CD4-positive, alpha-beta T cell (primary cell): ENCODE measurements at regions of chr7 and their contacts with region 1.

Region 1: GRCh38 chr7:43582503-43583423 is at the start of gene STK17A:
- DNase-seq: peak; percentile 86 to 98 (median 94)
- ATAC-seq: peak; percentile 71
- H3K4me3 ChIP-seq: peak within 1 kb of the TSS; percentile 77
- H3K4me3 Mint-ChIP-seq: peak within 1 kb of the TSS; percentile 95
- H3K27ac ChIP-seq: peak within 1 kb of the TSS; percentile 87 to 97
- H3K27ac Mint-ChIP-seq: peak within 1 kb of the TSS; percentile 98
- H3K4me1 ChIP-seq: peaks cover 10% of the 10 kb centered on the region
- H3K4me1 Mint-ChIP-seq: peaks cover 38% of the 10 kb centered on the region
- H3K27me3 ChIP-seq: no peaks in the 10 kb centered on the region
- H3K27me3 Mint-ChIP-seq: peaks cover 21% of the 10 kb centered on the region
- CTCF ChIP-seq: peak; percentile 85
- total RNA-seq, gene STK17A: 213 to 218 TPM

Region 2: GRCh38 chr7:42940985-42941847 is 641.5 kb before region 1 on chr7:
- CTCF ChIA-PET with region 1: no interaction called
- POLR2A ChIA-PET with region 1: interaction called, 3 read pairs
- intact Hi-C with region 1: loop called in 1 of 2 experiments (anchors 2 kb)
- DNase-seq: peak; percentile 58 to 80 (median 71)
- ATAC-seq: peak; percentile 72
- H3K4me3 ChIP-seq: no peak overlapping the region
- H3K4me3 Mint-ChIP-seq: no peak overlapping the region
- H3K27ac ChIP-seq: no peak overlapping the region
- H3K27ac Mint-ChIP-seq: no peak overlapping the region
- H3K4me1 ChIP-seq: peaks cover 4% of the 10 kb centered on the region
- H3K4me1 Mint-ChIP-seq: peaks cover 4% of the 10 kb centered on the region
- H3K27me3 ChIP-seq: no peaks in the 10 kb centered on the region
- H3K27me3 Mint-ChIP-seq: no peaks in the 10 kb centered on the region
- CTCF ChIP-seq: peak; percentile 87

Region 3: DNA sequence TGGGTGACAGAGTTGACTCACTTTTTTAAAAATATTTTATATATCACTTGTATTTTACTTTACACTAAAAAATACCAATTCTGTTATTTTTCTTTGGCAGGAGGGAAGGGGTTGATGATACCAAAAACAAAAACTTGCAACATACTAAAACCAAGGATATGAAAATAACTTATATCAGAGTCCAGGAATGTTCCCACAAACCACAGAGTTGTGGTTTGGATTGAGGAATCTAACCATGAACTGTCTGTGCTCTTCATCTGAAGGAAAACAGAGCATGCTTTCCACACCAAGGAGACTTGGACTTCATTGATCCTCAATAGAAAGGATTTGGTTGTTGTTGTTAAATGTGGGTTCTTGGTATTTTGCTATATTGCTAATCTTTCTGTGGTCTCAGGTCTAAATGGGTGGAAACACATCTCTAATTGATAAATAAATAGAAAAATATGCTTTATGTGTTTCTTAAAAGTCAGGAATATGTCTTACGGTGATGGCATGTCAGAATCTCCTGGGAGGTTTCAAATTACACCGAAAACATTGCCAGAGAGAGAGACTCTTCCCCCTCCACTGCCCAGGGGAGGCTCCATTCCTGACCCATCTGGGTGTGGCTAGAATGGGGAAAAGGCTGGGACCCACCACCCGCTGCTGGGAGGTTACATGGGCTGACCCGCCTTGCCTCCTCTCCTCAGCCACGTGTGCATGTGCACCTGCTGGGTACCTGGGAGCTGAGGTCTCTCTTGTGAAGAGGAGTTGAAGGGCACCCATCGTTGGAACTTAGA is 46.8 kb before region 1 on chr7:
- CTCF ChIA-PET with region 1: no interaction called
- POLR2A ChIA-PET with region 1: no interaction called
- intact Hi-C with region 1: no loop called
- DNase-seq: no peak
- ATAC-seq: no peak
- H3K4me3 ChIP-seq: no peak overlapping the region
- H3K4me3 Mint-ChIP-seq: no peak overlapping the region
- H3K27ac ChIP-seq: no peak overlapping the region
- H3K27ac Mint-ChIP-seq: no peak overlapping the region
- H3K4me1 ChIP-seq: no peaks in the 10 kb centered on the region
- H3K4me1 Mint-ChIP-seq: no peaks in the 10 kb centered on the region
- H3K27me3 ChIP-seq: peaks cover 0 to 2% of the 10 kb centered on the region in 2 experiments
- H3K27me3 Mint-ChIP-seq: no peaks in the 10 kb centered on the region
- CTCF ChIP-seq: no peak

Region 4: GRCh38 chr7:43546231-43546630 is 36.5 kb before region 1 on chr7:
- CTCF ChIA-PET with region 1: no interaction called
- POLR2A ChIA-PET with region 1: no interaction called
- intact Hi-C with region 1: no loop called
- DNase-seq: no peak
- ATAC-seq: no peak
- H3K4me3 ChIP-seq: no peak overlapping the region
- H3K4me3 Mint-ChIP-seq: no peak overlapping the region
- H3K27ac ChIP-seq: no peak overlapping the region
- H3K27ac Mint-ChIP-seq: no peak overlapping the region
- H3K4me1 ChIP-seq: no peaks in the 10 kb centered on the region
- H3K4me1 Mint-ChIP-seq: no peaks in the 10 kb centered on the region
- H3K27me3 ChIP-seq: peaks cover 0 to 3% of the 10 kb centered on the region in 2 experiments
- H3K27me3 Mint-ChIP-seq: peaks cover 20% of the 10 kb centered on the region
- CTCF ChIP-seq: no peak

Region 5: DNA sequence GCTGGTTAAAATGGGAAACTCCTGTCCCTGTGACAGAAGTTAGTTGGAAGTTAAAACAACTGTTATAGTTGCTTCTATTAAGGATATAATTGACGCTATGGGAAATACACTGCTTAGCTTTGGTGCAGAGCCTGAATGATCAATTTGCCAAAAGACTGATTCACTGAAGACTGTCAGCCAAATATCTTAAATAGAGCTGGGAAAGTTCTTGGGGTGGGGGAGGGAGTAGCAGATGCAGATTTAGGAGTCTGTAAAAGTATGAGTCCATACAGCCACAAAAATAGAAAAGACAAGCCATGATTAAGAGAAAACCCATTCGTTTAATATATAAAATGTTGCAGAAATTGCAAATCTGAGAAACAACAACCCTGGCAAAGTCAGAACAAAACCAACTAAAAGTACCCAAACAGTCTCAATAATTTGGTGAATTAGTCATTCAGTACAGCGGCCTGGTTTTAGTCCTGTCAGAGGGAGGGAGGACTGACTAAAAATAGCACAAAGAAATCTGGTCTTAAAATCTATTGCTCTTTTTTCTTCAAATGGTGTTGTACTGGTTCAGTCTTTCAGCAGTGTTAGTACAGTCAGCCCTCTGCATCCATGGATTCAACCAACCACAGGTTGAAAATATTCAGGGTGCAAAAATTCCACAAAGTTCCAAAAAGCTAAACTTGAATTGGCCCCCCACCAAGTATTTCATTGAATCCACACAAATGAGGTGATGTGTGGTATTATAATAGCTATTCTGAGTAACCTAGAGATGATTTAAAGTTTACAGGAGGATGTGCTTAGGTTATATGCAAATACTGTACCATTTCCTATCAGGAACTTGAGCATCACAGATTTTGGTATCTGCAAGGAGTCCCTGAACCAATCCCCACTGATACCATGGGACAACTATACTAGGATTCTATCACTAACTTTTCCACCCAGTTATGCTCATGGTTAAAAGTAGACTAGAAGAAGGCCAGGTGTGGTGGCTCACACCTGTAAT is 30.1 kb after region 1 on chr7:
- CTCF ChIA-PET with region 1: interaction called, 56 read pairs
- POLR2A ChIA-PET with region 1: interaction called, 27 read pairs
- intact Hi-C with region 1: no loop called
- DNase-seq: no peak
- ATAC-seq: peak; percentile 25
- H3K4me3 ChIP-seq: no peak overlapping the region
- H3K4me3 Mint-ChIP-seq: peak overlapping the region; percentile 23
- H3K27ac ChIP-seq: peak overlapping the region; percentile 40 to 44
- H3K27ac Mint-ChIP-seq: peak overlapping the region; percentile 72
- H3K4me1 ChIP-seq: peaks cover 62% of the 10 kb centered on the region
- H3K4me1 Mint-ChIP-seq: peaks cover 55% of the 10 kb centered on the region
- H3K27me3 ChIP-seq: no peaks in the 10 kb centered on the region
- H3K27me3 Mint-ChIP-seq: no peaks in the 10 kb centered on the region
- CTCF ChIP-seq: no peak

Region 6: GRCh38 chr7:43639858-43640491 is 57.2 kb after region 1 on chr7:
- CTCF ChIA-PET with region 1: interaction called, 167 read pairs
- POLR2A ChIA-PET with region 1: interaction called, 300 read pairs
- intact Hi-C with region 1: no loop called
- DNase-seq: no peak
- ATAC-seq: no peak
- H3K4me3 ChIP-seq: no peak overlapping the region
- H3K4me3 Mint-ChIP-seq: peak overlapping the region; percentile 61
- H3K27ac ChIP-seq: peak overlapping the region; percentile 46 to 51
- H3K27ac Mint-ChIP-seq: peak overlapping the region; percentile 87
- H3K4me1 ChIP-seq: peaks cover 71% of the 10 kb centered on the region
- H3K4me1 Mint-ChIP-seq: peaks cover 96% of the 10 kb centered on the region
- H3K27me3 ChIP-seq: no peaks in the 10 kb centered on the region
- H3K27me3 Mint-ChIP-seq: no peaks in the 10 kb centered on the region
- CTCF ChIP-seq: no peak

Region 7: GRCh38 chr7:43674584-43675436 is 92.0 kb after region 1 on chr7:
- CTCF ChIA-PET with region 1: interaction called, 46 read pairs
- POLR2A ChIA-PET with region 1: interaction called, 11 read pairs
- intact Hi-C with region 1: no loop called
- DNase-seq: no peak
- ATAC-seq: no peak
- H3K4me3 ChIP-seq: no peak overlapping the region
- H3K4me3 Mint-ChIP-seq: no peak overlapping the region
- H3K27ac ChIP-seq: no peak overlapping the region
- H3K27ac Mint-ChIP-seq: peak overlapping the region; percentile 56
- H3K4me1 ChIP-seq: peaks cover 18% of the 10 kb centered on the region
- H3K4me1 Mint-ChIP-seq: peaks cover 87% of the 10 kb centered on the region
- H3K27me3 ChIP-seq: no peaks in the 10 kb centered on the region
- H3K27me3 Mint-ChIP-seq: no peaks in the 10 kb centered on the region
- CTCF ChIP-seq: no peak

Region 8: GRCh38 chr7:43711503-43711902 is 128.7 kb after region 1 on chr7:
- CTCF ChIA-PET with region 1: interaction called, 26 read pairs
- POLR2A ChIA-PET with region 1: interaction called, 18 read pairs
- intact Hi-C with region 1: no loop called
- DNase-seq: no peak
- ATAC-seq: no peak
- H3K4me3 ChIP-seq: no peak overlapping the region
- H3K4me3 Mint-ChIP-seq: no peak overlapping the region
- H3K27ac ChIP-seq: no peak overlapping the region
- H3K27ac Mint-ChIP-seq: no peak overlapping the region
- H3K4me1 ChIP-seq: peaks cover under 1% of the 10 kb centered on the region
- H3K4me1 Mint-ChIP-seq: peaks cover 35% of the 10 kb centered on the region
- H3K27me3 ChIP-seq: no peaks in the 10 kb centered on the region
- H3K27me3 Mint-ChIP-seq: no peaks in the 10 kb centered on the region
- CTCF ChIP-seq: no peak

Region 9: GRCh38 chr7:43834463-43835251 is 251.9 kb after region 1 on chr7:
- CTCF ChIA-PET with region 1: interaction called, 39 read pairs
- POLR2A ChIA-PET with region 1: interaction called, 18 read pairs
- intact Hi-C with region 1: loop called (anchors 1 kb)
- DNase-seq: peak in 10 of 14 experiments; percentile 4 to 82 (median 12)
- ATAC-seq: peak; percentile 56
- H3K4me3 ChIP-seq: peak overlapping the region; percentile 68
- H3K4me3 Mint-ChIP-seq: peak overlapping the region; percentile 94
- H3K27ac ChIP-seq: peak overlapping the region in 1 of 2 donors; percentile 76
- H3K27ac Mint-ChIP-seq: peak overlapping the region; percentile 93
- H3K4me1 ChIP-seq: peaks cover 29% of the 10 kb centered on the region
- H3K4me1 Mint-ChIP-seq: peaks cover 26% of the 10 kb centered on the region
- H3K27me3 ChIP-seq: no peaks in the 10 kb centered on the region
- H3K27me3 Mint-ChIP-seq: peaks cover 3% of the 10 kb centered on the region
- CTCF ChIP-seq: no peak